ENCODE measurements at regions of chr11 and their contacts with region 1.

Region 1: DNA sequence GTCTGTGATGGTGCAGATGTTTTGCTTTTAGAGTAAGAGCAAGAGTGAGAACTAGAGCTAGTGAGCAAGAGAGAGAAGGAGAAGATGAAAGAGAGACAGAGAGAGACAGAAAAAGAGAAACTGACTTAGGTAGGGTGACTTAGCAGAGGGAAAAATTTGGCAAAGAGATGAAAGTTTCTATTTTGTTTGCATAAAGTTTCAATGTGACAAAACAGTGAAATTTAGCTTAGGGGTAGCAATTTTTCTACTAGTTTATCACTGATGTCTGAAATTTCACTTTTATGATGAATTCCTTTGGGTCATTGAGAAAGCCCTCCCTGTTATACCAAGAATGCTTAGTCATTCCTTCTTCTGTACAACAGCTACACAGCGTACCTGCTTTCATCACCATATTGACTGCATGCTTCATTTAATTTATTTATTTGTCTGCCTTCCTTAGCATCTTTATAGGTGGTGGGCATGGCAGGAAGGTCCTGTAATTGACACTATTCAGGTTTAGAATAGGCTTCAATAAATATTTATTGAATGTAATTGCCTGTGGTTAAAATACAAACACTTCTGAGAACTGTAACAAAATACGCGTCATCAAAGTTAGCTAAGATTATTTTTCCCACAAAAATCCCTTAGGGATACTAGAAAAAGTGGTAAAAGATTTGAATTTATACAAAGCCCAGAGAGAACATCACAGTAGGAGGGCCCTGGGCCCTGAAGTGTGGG is 19.9 kb upstream of the CTSC start:
- DNase-seq: no peak
- H3K4me3 Mint-ChIP-seq: peak overlapping the region; percentile 14
- H3K27ac Mint-ChIP-seq: peak overlapping the region; percentile 67
- H3K4me1 Mint-ChIP-seq: peaks cover 46% of the 10 kb centered on the region
- H3K27me3 Mint-ChIP-seq: no peaks in the 10 kb centered on the region

Region 2: DNA sequence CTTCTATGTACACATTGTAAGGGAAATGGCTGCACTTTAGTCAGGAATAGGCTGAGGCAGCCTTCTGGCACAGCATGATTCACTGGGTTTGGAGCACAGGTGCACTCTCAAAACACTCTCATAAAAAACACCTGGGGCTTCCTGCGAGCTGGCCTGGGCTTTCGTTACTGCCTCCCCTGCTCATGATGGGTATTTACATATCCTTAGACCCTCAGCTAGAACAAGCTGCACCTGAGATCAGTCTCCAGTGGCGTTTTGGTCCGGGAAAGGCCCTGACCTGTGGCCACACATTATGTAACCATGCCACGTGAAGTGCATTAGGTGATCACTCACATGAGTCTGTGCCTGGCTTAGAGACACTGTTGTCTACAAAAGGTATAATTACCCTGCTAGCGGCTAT is 998.1 kb before region 1 on chr11:
- CTCF ChIA-PET with region 1: no interaction called
- POLR2A ChIA-PET with region 1: no interaction called
- intact Hi-C with region 1: no loop called
- DNase-seq: no peak
- H3K4me3 Mint-ChIP-seq: no peak overlapping the region
- H3K27ac Mint-ChIP-seq: no peak overlapping the region
- H3K4me1 Mint-ChIP-seq: no peaks in the 10 kb centered on the region
- H3K27me3 Mint-ChIP-seq: no peaks in the 10 kb centered on the region

Region 3: GRCh38 chr11:88301488-88302140 is 55.9 kb before region 1 on chr11:
- CTCF ChIA-PET with region 1: interaction called, 3 read pairs
- POLR2A ChIA-PET with region 1: no interaction called
- intact Hi-C with region 1: loop called (anchors 2 kb)
- DNase-seq: peak; percentile 43
- H3K4me3 Mint-ChIP-seq: peak overlapping the region; percentile 46
- H3K27ac Mint-ChIP-seq: peak overlapping the region; percentile 78
- H3K4me1 Mint-ChIP-seq: peaks cover 32% of the 10 kb centered on the region
- H3K27me3 Mint-ChIP-seq: no peaks in the 10 kb centered on the region

Region 4: GRCh38 chr11:88414385-88414861 is 56.9 kb after region 1 on chr11:
- CTCF ChIA-PET with region 1: no interaction called
- POLR2A ChIA-PET with region 1: interaction called, 3 read pairs
- intact Hi-C with region 1: loop called (anchors 1 kb)
- DNase-seq: peak; percentile 31
- H3K4me3 Mint-ChIP-seq: no peak overlapping the region
- H3K27ac Mint-ChIP-seq: peak overlapping the region; percentile 78
- H3K4me1 Mint-ChIP-seq: peaks cover 25% of the 10 kb centered on the region
- H3K27me3 Mint-ChIP-seq: no peaks in the 10 kb centered on the region

Region 5: GRCh38 chr11:88535916-88536547 is 178.6 kb after region 1 on chr11:
- CTCF ChIA-PET with region 1: interaction called, 3 read pairs
- POLR2A ChIA-PET with region 1: no interaction called
- intact Hi-C with region 1: loop called (anchors 1 kb)
- DNase-seq: no peak
- H3K4me3 Mint-ChIP-seq: no peak overlapping the region
- H3K27ac Mint-ChIP-seq: no peak overlapping the region
- H3K4me1 Mint-ChIP-seq: peaks cover 19% of the 10 kb centered on the region
- H3K27me3 Mint-ChIP-seq: peaks cover 8% of the 10 kb centered on the region